ENCODE measurements at regions of chr11 and their contacts with region 1.

Region 1: DNA sequence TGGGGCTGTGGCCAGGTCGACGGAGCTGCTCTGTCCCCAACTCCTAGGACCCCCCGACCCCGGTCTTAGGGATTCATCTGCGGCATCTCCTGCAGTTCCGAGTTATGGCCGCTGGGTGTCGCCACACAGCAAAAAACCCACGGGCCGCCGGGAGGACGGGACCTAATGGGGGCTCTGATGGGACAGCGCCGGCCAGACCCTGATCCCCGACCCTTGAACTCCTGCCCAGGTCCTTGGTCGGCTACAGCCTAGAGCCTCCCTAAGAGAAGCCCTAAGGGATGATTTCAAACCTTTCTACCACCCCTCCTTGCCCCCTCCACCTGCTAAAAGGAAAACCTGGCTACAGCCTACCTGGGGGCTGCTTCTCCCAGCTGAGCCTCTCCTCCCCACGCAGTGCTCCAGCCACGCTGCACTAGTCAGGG is 30.8 kb upstream of the LRRC10B start:
- DNase-seq: peak in 1 of 2 donors; percentile 91
- H3K4me3 ChIP-seq: no peak overlapping the region
- CTCF ChIP-seq: peak in 1 of 3 donors; percentile 53
- POLR2A ChIP-seq: no peak

Region 2: DNA sequence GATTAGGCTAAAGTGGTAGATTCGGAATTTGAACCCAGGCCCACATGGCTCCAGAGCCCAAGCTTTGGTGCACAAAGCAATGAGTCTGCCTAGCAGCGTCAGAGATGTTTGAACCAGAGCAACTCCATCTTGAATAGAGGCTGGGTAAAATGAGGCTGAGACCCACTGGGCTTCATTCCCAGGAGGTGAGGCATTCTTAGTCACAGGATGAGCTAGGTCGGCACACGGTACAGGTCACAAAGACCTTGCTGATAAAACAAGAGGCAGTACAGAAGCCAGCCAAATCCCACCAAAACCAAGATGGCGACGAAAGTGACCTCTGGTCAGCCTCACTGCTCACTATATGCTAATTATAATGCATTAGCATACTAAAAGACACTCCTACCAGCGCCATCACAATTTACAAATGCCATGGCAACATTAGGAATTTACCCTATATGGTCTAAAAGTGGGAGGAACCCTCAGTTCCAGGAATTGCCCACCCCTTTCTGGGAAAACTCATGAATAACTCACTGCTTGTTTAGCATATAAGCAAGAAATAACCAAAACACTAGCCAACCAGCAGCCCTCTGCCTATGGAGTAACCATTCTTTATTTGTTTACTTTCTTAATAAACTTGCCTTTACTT is 162.2 kb after region 1 on chr11:
- intact Hi-C with region 1: loop called (anchors 10 kb)
- DNase-seq: no peak
- H3K4me3 ChIP-seq: no peak overlapping the region
- CTCF ChIP-seq: no peak
- POLR2A ChIP-seq: no peak

Measured in lower leg skin (tissue), 4 donors.